CD4-positive, alpha-beta T cell (primary cell): ENCODE measurements at regions of chr9 and their contacts with region 1.

Region 1: DNA sequence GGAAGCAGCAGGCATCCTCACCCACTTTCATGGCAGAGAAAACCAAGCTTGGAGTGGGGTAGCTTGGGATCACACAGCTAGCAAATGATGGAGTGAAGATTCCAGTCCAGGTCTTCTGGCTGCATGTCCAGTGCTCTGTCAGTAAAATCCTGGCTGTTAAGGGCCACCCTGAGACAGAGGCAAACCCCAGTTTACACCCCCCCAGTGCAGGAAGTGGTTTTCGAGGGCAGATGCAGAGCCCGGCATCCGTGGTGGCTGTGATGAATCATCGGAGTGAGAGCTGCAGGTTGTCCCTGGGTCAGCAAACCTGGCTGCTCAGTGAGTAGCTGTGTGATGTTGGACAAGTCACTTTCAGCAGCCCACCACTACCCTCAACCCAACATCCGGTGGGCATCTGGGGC is 115.4 kb downstream of the RGS3 start:
- DNase-seq: peak; percentile 58 to 93 (median 77)
- ATAC-seq: peak; percentile 59
- H3K4me3 ChIP-seq: peak overlapping the region; percentile 25
- H3K4me3 Mint-ChIP-seq: peak overlapping the region; percentile 85
- H3K27ac ChIP-seq: peak overlapping the region; percentile 72 to 77
- H3K27ac Mint-ChIP-seq: peak overlapping the region; percentile 94
- H3K4me1 ChIP-seq: peaks cover 74% of the 10 kb centered on the region
- H3K4me1 Mint-ChIP-seq: peaks cover 78% of the 10 kb centered on the region
- H3K27me3 ChIP-seq: no peaks in the 10 kb centered on the region
- H3K27me3 Mint-ChIP-seq: no peaks in the 10 kb centered on the region
- CTCF ChIP-seq: no peak

Region 2: GRCh38 chr9:113410207-113410864 is 168.5 kb before region 1 on chr9 and contains the starts of genes C9orf43 and POLE3:
- CTCF ChIA-PET with region 1: interaction called, 5 read pairs
- POLR2A ChIA-PET with region 1: interaction called, 59 read pairs
- intact Hi-C with region 1: no loop called
- DNase-seq: peak; percentile 89 to 97 (median 92)
- ATAC-seq: peak; percentile 83
- H3K4me3 ChIP-seq: peak within 1 kb of the TSS; percentile 83
- H3K4me3 Mint-ChIP-seq: peak within 1 kb of the TSS; percentile 99
- H3K27ac ChIP-seq: peak within 1 kb of the TSS; percentile 74 to 94
- H3K27ac Mint-ChIP-seq: peak within 1 kb of the TSS; percentile 94
- H3K4me1 ChIP-seq: peaks cover 19% of the 10 kb centered on the region
- H3K4me1 Mint-ChIP-seq: peaks cover 37% of the 10 kb centered on the region
- H3K27me3 ChIP-seq: no peaks in the 10 kb centered on the region
- H3K27me3 Mint-ChIP-seq: no peaks in the 10 kb centered on the region
- CTCF ChIP-seq: no peak
- total RNA-seq, gene C9orf43: 0.60 to 0.95 TPM
- total RNA-seq, gene POLE3: 63.6 to 64.9 TPM

Region 3: DNA sequence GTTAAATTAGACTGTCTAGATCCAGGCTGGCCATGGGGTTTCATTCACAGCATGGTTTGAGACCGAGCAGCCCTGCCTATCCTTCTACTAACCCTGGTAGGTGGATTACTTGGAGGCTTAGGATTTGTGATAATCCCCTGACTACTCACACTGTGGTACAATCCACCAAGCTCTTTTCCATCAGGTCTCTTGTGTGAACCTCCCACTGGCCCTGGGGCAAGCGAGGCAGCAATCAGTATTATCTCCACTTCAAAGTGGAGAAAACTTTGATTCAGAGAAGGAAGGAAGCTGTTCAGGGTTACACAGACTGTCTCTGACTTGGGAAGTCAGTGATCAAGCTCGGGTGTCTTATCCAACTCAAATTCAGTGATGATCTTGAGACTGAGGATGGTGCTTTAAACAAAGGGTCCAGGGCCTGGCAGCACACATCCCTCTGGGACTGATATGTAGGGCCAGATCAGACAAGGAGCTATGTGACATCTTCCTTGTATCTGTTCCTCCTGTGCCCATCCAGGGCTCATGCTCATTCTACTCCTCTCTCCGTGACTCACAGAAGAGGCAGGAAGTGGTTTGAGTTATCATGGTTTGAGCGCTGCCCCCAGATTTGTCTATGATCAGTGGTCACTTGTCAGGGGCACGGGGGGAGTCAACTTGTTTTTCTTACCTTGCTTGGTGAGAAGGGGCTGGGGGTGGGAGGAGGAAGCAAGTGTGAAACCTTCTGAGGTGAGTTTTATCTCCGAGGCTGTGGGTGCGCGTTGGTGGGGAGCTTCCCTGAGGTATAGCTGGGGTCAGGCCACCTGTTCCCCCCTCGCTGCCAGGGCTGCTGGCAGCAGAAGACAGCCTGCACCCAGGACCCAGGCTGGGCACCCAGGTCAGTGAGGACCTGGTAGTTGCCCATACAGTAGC is 66.8 kb before region 1 on chr9:
- CTCF ChIA-PET with region 1: interaction called, 4 read pairs
- POLR2A ChIA-PET with region 1: interaction called, 44 read pairs
- intact Hi-C with region 1: loop called in 1 of 2 experiments (anchors 5 kb)
- DNase-seq: peak in 13 of 14 experiments; percentile 33 to 84 (median 52)
- ATAC-seq: peak; percentile 60
- H3K4me3 ChIP-seq: peak overlapping the region; percentile 27
- H3K4me3 Mint-ChIP-seq: peak overlapping the region; percentile 84
- H3K27ac ChIP-seq: peak overlapping the region; percentile 71 to 77
- H3K27ac Mint-ChIP-seq: peak overlapping the region; percentile 86
- H3K4me1 ChIP-seq: peaks cover 58% of the 10 kb centered on the region
- H3K4me1 Mint-ChIP-seq: peaks cover 62% of the 10 kb centered on the region
- H3K27me3 ChIP-seq: no peaks in the 10 kb centered on the region
- H3K27me3 Mint-ChIP-seq: no peaks in the 10 kb centered on the region
- CTCF ChIP-seq: no peak

Region 4: DNA sequence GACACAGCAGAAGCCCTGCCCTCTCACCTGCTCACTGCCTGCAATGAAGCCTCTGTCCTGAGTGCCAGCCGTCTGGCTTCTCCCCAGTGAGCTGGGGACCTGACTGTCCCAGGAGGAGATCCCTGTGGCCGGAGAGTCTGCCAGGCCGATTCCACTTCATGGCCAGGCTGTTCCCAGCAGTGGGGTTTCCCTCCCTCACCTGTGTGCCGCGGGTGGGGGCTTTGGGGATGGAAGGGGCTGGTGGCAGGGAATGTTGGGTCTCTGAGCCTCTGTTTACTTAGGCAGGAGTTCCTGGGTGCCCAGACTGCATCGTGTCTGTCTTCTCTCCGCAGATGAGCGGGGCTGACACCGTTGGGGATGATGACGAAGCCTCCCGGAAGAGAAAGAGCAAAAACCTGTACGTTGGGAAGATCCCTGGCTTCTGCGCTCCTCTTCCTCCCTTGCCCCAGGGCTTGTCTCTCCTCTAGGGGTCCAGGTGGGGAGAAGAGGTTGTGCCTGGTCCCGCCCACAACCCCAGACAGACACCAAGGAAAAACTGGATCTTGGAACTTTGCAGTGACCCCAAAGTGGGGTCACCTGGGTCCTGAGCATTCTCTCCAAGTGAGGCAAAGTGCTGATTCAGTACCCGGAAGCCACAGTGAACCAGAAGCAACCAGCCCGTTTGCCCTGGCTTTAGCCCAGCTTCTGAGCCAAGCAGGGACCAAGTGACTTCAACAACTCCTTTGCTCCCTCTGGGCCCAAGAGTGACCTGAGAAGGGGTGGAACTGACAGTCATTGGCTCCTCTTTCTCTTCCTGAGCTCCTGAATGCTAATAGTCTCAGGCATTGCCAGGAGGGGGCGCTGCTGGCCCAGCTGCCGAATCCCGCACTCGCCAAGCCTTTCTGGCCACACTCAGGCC is 12.4 kb after region 1 on chr9:
- CTCF ChIA-PET with region 1: interaction called, 5 read pairs
- POLR2A ChIA-PET with region 1: interaction called, 14 read pairs
- intact Hi-C with region 1: no loop called
- DNase-seq: peak in 11 of 14 experiments; percentile 20 to 69 (median 40)
- ATAC-seq: no peak
- H3K4me3 ChIP-seq: no peak overlapping the region
- H3K4me3 Mint-ChIP-seq: no peak overlapping the region
- H3K27ac ChIP-seq: no peak overlapping the region
- H3K27ac Mint-ChIP-seq: no peak overlapping the region
- H3K4me1 ChIP-seq: peaks cover 42% of the 10 kb centered on the region
- H3K4me1 Mint-ChIP-seq: peaks cover 33% of the 10 kb centered on the region
- H3K27me3 ChIP-seq: no peaks in the 10 kb centered on the region
- H3K27me3 Mint-ChIP-seq: no peaks in the 10 kb centered on the region
- CTCF ChIP-seq: peak; percentile 59